Heart left ventricle (tissue), 16 donors: ENCODE measurements at regions of chr19 and their contacts with region 1.

Region 1: DNA sequence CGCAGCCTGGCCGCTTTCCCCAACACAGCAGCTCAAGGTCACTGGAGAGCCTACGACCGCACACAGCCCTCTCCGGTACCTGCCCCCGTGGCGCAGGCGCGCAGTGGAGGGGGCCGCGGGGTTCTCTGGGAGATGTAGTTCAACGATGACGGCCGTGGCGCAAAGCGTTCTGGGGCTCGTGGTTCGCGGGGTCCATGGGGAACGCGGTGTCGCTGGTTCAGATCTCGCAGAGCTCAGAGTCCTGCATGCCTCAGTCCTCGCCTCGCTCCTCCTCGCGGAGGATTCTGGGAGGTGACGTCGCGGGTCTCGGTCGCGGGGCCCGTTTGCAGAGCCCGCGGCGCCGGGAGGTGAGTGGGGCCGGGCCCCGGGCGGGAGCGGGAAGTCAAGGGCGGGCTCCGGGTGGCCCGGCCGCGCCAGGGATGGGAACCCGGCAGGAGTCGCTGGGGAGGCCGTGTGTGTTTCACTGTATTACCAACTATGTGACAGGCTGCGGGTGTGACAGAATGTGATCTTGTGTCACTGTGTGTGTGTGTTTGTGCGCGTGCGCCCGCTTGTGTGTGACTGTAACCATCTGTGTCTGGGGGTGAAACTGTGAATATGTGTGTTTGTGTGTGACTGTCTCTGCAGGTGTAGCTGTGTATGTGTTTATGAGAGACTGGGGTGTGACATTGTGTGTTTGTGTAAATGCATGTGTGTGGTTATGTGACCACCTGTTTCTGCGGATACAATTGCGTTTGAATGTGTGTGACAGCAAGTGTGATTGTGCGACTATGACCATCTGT is at the start of gene ZNF527:
- DNase-seq: peak; percentile 98 to 99 (median 99)
- ATAC-seq: peak; percentile 99
- H3K4me3 ChIP-seq: peak within 1 kb of the TSS; percentile 39 to 93 (median 78)
- H3K27ac ChIP-seq: peak within 1 kb of the TSS; percentile 66 to 94 (median 89)
- H3K4me1 ChIP-seq: peaks cover 0 to 16% (median 9%) of the 10 kb centered on the region in 12 donors
- H3K27me3 ChIP-seq: no peaks in the 10 kb centered on the region
- CTCF ChIP-seq: peak in 2 of 12 donors; percentile 9 to 25
- POLR2A ChIP-seq: peak; percentile 40 to 95
- total RNA-seq, gene ZNF527: 3.9 to 9.3 (median 6.1) TPM

Region 2: GRCh38 chr19:36833430-36833829 is 537.6 kb before region 1 on chr19:
- intact Hi-C with region 1: no loop called
- DNase-seq: no peak
- ATAC-seq: no peak
- H3K4me3 ChIP-seq: no peak overlapping the region
- H3K27ac ChIP-seq: no peak overlapping the region
- H3K4me1 ChIP-seq: peaks cover 0 to 24% (median 7%) of the 10 kb centered on the region in 12 donors
- H3K27me3 ChIP-seq: no peaks in the 10 kb centered on the region
- CTCF ChIP-seq: no peak
- POLR2A ChIP-seq: no peak

Region 3: GRCh38 chr19:36973021-36973843 is 397.8 kb before region 1 on chr19:
- intact Hi-C with region 1: loop called in 1 of 10 experiments (anchors 2 kb)
- DNase-seq: peak; percentile 88 to 94 (median 90)
- ATAC-seq: peak; percentile 99 to 100 (median 100)
- H3K4me3 ChIP-seq: peak overlapping the region; percentile 24 to 91 (median 72)
- H3K27ac ChIP-seq: peak overlapping the region in 11 of 12 donors; percentile 41 to 89 (median 78)
- H3K4me1 ChIP-seq: peaks cover 0 to 21% (median 11%) of the 10 kb centered on the region in 12 donors
- H3K27me3 ChIP-seq: no peaks in the 10 kb centered on the region
- CTCF ChIP-seq: peak; percentile 74 to 97 (median 92)
- POLR2A ChIP-seq: peak in 1 of 2 donors; percentile 28

Region 4: DNA sequence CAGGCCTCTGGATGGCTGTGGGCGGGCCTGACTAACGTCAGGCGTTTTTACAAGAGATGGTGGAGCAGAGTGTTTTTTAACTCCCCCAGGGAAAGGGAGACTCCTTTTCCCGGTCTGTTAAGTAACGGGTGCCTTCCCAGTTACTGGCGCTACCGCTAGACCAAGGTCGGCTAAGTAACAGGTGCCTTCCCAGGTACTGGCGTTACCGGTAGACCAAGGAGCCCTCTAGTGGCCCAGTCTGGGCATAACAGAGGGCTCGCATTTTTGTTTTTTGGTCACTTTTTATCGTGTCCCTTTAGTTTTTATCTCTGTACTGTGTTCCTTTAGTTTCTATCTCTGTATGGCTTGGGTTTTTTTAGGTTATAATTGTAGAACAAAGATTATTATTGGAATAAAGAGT is 143.1 kb before region 1 on chr19:
- intact Hi-C with region 1: loop called in 1 of 10 experiments (anchors 10 kb)
- DNase-seq: no peak
- ATAC-seq: no peak
- H3K4me3 ChIP-seq: no peak overlapping the region
- H3K27ac ChIP-seq: no peak overlapping the region
- H3K4me1 ChIP-seq: no peaks in the 10 kb centered on the region
- H3K27me3 ChIP-seq: no peaks in the 10 kb centered on the region
- CTCF ChIP-seq: peak; percentile 29 to 65 (median 54)
- POLR2A ChIP-seq: no peak

Region 5: DNA sequence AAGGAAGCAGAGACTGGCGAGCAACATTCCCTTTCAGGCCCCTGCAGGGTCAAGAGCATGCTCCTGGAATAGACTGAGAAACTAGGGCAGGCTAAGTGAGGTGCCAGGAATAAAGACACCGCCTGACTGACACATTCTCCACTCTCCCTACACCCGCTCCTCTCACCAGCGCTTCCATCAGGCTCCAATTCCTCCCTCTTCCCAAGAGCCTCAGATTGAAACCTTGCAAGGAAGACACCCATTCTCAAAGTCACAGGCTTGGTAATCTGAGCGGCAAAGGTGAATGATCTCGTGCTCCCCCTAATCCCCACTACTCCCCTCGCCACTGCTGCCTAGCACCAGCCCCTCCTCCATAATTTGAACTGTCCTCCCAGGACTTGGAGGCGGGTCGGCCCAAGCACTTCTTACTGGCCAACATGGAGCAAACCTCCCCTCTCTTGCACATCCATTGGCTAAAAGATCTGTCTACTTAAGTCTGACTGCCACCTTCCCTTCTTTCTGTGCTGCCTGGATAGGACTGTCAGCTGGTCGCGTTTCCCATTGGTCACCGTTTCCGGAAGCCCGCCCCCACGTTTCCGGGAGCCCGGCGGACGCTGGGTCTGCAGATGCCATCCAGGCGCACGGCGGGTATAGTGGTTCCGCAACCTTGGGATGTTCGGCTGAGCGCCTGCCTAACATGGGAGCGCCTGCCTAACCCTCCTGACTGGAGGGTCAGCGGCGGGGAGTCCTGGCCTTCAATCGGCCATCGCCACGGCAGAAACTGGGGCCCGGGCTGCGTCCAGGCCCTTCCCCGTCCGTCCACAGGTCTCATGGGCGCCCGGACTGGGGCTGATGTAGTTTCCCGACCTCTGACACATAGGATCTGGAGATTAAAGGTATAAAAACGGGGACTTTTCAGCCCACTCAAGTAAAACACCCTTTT is 119.5 kb before region 1 on chr19:
- intact Hi-C with region 1: loop called in 1 of 10 experiments (anchors 10 kb)
- DNase-seq: peak; percentile 89 to 92 (median 91)
- ATAC-seq: peak; percentile 99 to 100 (median 99)
- H3K4me3 ChIP-seq: peak overlapping the region; percentile 44 to 98 (median 72)
- H3K27ac ChIP-seq: peak overlapping the region in 11 of 12 donors; percentile 71 to 91 (median 81)
- H3K4me1 ChIP-seq: peaks cover 0 to 18% (median 0%) of the 10 kb centered on the region in 12 donors
- H3K27me3 ChIP-seq: no peaks in the 10 kb centered on the region
- CTCF ChIP-seq: no peak
- POLR2A ChIP-seq: peak in 1 of 2 donors; percentile 28

Region 6: GRCh38 chr19:37309834-37310575 is 61.1 kb before region 1 on chr19:
- intact Hi-C with region 1: loop called in 3 of 10 experiments (anchors 10 kb)
- DNase-seq: no peak
- ATAC-seq: no peak
- H3K4me3 ChIP-seq: no peak overlapping the region
- H3K27ac ChIP-seq: no peak overlapping the region
- H3K4me1 ChIP-seq: peaks cover 0 to 10% (median 2%) of the 10 kb centered on the region in 12 donors
- H3K27me3 ChIP-seq: no peaks in the 10 kb centered on the region
- CTCF ChIP-seq: peak in 1 of 12 donors; percentile 12
- POLR2A ChIP-seq: no peak

Region 7: GRCh38 chr19:37334179-37335071 is 36.6 kb before region 1 on chr19:
- intact Hi-C with region 1: loop called in 3 of 10 experiments (anchors 2 to 5 kb)
- DNase-seq: peak; percentile 93 to 96 (median 95)
- ATAC-seq: peak; percentile 98 to 99 (median 99)
- H3K4me3 ChIP-seq: peak overlapping the region; percentile 62 to 99 (median 84)
- H3K27ac ChIP-seq: peak overlapping the region; percentile 19 to 95 (median 87)
- H3K4me1 ChIP-seq: peaks cover 3 to 51% (median 27%) of the 10 kb centered on the region in 12 donors
- H3K27me3 ChIP-seq: no peaks in the 10 kb centered on the region
- CTCF ChIP-seq: no peak
- POLR2A ChIP-seq: peak in 1 of 2 donors; percentile 82

Region 8: DNA sequence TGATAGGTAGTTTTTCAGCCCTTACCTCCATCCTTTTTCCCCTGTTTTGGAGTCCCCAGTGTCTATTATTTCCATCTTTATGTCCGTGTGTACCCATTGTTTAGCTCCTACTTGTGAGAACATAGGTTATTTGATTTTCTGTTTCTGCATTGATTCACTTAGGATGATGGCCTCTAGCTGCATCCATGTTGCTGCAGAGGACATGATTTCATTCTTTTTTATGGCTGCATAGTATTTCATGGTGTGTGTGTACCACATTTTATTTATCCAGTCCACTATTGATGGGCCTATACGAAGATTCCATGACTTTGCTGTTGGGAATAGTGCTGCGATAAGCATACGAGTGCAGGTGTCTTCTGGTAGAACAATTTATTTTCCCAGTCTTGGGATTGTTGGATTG is 15.2 kb before region 1 on chr19:
- intact Hi-C with region 1: loop called in 1 of 10 experiments (anchors 2 kb)
- DNase-seq: no peak
- ATAC-seq: no peak
- H3K4me3 ChIP-seq: no peak overlapping the region
- H3K27ac ChIP-seq: no peak overlapping the region
- H3K4me1 ChIP-seq: no peaks in the 10 kb centered on the region
- H3K27me3 ChIP-seq: no peaks in the 10 kb centered on the region
- CTCF ChIP-seq: no peak
- POLR2A ChIP-seq: no peak